Breast epithelium (tissue), 4 donors: ENCODE measurements at regions of chr6 and their contacts with region 1.

Region 1: DNA sequence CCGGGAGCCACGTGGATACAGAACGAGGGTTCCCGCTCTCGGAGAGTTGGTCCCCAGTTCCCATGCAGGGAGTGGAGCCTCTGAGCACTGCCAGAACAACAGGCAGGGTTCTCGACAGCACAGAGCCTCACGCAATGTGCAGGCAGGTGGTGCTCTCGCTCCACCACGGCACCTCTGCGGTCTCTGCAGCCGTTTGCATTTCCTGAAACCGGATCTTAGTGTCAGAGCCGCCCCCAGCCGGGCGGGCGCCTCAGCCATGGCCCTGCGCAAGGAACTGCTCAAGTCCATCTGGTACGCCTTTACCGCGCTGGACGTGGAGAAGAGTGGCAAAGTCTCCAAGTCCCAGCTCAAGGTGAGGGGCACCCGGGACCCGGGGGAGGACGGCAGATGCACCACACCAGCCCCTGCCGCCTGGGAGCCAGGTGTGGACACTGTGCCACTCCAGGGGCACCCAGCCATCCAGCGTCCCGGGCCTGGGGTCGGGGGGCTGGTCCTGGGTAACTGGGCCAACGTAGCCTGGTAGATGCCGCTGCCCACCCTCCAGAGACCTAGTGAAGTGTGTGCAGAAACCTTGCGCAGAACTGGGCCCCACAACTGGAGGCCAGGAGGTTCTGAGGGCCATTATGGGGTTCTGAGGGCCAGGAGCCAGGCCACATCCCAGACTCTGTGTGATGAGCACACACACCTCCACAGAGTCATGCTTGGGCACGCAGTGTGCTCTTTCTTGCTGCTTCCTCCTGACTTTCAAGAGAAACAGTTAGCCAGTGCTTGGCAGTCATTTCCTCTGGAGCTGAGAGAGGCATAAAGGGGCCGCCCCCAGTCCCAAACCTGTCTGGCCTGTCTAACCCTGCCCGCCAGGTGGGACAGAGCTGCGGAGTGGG is at the start of gene DEF6:
- DNase-seq: peak; percentile 84 to 88
- H3K4me3 ChIP-seq: peak within 1 kb of the TSS; percentile 34 to 78 (median 57)
- H3K27ac ChIP-seq: peak within 1 kb of the TSS; percentile 80 to 89
- H3K4me1 ChIP-seq: peaks cover 4 to 6% of the 10 kb centered on the region in 2 donors
- H3K27me3 ChIP-seq: no peaks in the 10 kb centered on the region
- CTCF ChIP-seq: peak; percentile 10 to 86 (median 73)
- POLR2A ChIP-seq: no peak
- total RNA-seq, gene DEF6: 4.8 to 14.2 (median 14.1) TPM

Region 2: GRCh38 chr6:35148167-35148741 is 149.6 kb before region 1 on chr6:
- intact Hi-C with region 1: no loop called
- DNase-seq: no peak
- H3K4me3 ChIP-seq: no peak overlapping the region
- H3K27ac ChIP-seq: no peak overlapping the region
- H3K4me1 ChIP-seq: no peaks in the 10 kb centered on the region
- H3K27me3 ChIP-seq: no peaks in the 10 kb centered on the region
- CTCF ChIP-seq: no peak
- POLR2A ChIP-seq: no peak

Region 3: GRCh38 chr6:35280903-35281302 is 16.9 kb before region 1 on chr6:
- intact Hi-C with region 1: no loop called
- DNase-seq: no peak
- H3K4me3 ChIP-seq: no peak overlapping the region
- H3K27ac ChIP-seq: no peak overlapping the region
- H3K4me1 ChIP-seq: no peaks in the 10 kb centered on the region
- H3K27me3 ChIP-seq: no peaks in the 10 kb centered on the region
- CTCF ChIP-seq: no peak
- POLR2A ChIP-seq: no peak

Region 4: DNA sequence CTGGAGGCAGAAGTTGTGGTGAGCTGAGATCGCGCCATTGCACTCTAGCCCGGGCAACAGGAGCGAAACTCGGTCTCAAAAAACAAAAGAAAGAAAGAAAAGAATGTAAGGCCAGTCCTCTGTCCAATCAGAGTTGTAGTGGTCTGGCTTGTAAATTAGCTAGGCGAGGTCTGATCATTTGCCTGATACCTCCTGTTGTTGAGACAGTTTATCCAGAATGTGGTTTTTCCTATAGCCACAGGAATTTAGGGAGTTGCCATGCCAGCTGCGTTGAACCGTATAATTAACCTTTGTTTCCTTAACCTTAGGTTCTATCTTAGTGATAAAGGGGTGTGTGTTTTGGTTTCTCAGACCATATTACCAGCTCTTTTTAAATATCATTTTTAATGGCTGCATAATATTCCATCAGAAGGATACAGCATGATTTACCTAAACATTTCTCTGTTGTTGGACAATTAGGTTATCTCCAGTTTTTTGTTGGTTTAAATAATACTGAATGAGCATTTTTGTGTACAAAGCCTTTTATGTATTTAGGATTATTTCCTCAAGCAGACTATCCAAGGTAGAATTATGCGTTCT is 32.8 kb after region 1 on chr6:
- intact Hi-C with region 1: no loop called
- DNase-seq: no peak
- H3K4me3 ChIP-seq: no peak overlapping the region
- H3K27ac ChIP-seq: no peak overlapping the region
- H3K4me1 ChIP-seq: no peaks in the 10 kb centered on the region
- H3K27me3 ChIP-seq: no peaks in the 10 kb centered on the region
- CTCF ChIP-seq: no peak
- POLR2A ChIP-seq: no peak

Region 5: DNA sequence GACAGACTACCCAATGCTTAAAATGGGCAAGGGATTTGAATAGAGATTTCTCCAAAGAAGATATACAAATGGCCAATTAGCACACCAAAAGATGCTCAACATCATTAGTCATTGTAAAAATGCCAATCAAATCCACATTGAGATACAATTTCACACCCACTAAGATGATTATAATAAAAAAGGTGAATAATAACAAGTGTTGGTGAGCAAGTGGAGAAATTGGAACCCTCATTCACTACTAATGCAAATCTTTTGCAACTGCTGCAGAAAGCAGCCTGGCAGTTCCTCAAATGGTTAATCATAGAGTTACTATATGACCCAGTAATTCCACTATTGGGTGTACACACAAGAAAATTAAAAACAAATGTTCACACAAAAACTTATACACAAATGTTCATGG is 519.7 kb after region 1 on chr6:
- intact Hi-C with region 1: loop called (anchors 5 kb)
- DNase-seq: no peak
- H3K4me3 ChIP-seq: no peak overlapping the region
- H3K27ac ChIP-seq: no peak overlapping the region
- H3K4me1 ChIP-seq: no peaks in the 10 kb centered on the region
- H3K27me3 ChIP-seq: no peaks in the 10 kb centered on the region
- CTCF ChIP-seq: no peak
- POLR2A ChIP-seq: no peak

Region 6: DNA sequence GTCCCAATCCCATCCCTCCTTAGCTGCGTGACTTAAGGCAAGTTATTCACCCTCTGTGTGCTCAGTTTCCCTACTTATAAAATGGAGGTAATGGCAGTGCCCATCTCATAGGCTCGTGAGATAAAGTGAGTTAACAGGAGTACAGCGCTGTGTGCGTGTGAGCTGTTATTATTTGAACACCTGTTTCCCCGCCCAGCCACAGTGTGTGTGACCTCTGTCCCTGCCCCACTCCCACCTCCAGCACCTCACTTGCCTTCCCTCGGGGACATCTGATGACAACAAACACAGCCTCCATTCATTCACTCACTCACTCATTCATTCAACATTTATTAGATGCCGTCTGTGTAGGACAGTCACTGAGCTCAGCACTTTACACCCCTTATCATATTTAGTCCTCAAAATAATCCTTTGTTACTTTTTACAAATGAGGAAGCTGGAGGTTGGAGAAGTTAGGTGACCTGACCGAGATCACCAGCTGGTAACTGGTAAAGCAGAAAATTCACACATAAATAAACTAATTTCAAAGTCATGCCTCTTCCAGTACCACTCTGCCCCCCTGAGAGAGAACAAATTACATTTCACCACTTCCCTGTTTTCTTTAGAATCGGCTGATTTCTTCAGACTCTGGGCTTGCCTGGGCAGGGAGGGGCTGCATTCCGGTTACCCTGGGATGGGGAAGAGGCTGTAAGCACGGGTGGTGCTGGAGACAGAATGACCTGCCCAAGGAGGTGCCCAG is 1482.8 kb after region 1 on chr6:
- intact Hi-C with region 1: no loop called
- DNase-seq: no peak
- H3K4me3 ChIP-seq: no peak overlapping the region
- H3K27ac ChIP-seq: no peak overlapping the region
- H3K4me1 ChIP-seq: no peaks in the 10 kb centered on the region
- H3K27me3 ChIP-seq: no peaks in the 10 kb centered on the region
- CTCF ChIP-seq: no peak
- POLR2A ChIP-seq: no peak